GM13976 (cell line): ENCODE measurements at regions of chr6 and their contacts with region 1.

Region 1: DNA sequence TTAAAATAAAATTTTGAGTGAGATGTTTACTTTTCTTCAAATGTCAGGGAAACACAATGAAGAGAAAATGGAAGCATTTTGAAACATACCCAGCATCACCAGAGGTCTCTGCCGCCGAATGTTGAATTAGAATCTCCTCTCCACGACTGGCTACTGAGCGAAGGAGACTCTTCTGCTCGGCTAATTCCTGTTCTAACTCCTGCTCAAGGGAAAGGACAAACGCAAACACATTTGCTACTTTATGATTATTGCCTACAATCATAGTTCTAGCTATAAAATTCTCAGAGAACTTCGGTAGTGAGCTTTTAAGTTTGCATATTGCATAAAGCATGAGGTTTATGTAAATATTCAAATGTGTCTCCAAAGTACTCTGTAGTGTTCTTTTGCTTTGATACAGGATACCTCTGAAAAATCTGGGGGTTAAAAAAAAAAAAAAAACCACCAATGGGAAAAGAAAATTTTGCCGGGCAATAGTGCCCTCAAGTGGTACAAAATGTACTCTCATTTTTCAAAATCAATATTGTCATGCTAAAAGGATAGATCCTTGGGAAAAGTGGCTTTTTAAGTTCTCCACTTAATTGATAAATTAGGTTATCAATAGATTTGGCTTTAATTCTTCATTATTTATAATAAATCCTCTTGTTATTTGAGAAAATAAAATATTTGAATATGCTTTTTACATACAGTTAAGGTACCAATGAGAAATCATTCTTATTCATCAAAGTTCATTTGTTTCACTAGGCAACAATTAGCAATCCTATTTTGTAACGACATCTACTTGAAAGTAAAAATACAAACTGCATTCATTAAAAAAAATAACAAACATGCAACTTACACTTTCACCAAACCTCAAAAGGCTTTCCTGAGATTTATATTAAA is 369.0 kb downstream of the SYNE1 start:
- DNase-seq: peak; percentile 24
- CTCF ChIP-seq: peak; percentile 30

Region 2: GRCh38 chr6:151681433-151682059 is 586.7 kb before region 1 on chr6:
- in situ Hi-C with region 1: loop called (anchors 10 kb)
- DNase-seq: no peak
- CTCF ChIP-seq: no peak

Region 3: DNA sequence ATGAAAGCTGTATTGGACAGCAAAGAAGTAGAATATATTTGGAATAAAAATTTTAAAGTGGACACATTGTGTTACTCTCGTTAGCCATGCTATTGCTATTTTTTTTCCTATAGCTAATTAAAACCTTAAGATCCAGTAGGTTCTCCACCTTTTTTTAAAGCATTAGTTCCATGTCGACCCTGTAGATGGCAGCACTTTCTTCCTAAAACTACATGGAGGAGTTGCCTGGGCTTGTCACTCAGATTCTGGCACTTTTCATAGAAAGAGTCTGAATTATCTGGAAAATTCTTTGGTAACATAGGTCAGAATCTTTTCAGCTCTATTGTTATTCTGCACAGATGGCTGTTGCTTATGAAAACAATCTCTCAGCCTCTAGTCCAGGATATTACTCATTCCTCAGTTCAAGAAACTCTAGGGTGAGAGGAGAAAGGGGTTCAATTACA is 502.7 kb before region 1 on chr6:
- in situ Hi-C with region 1: loop called (anchors 10 kb)
- DNase-seq: peak; percentile 67
- CTCF ChIP-seq: peak; percentile 52

Region 4: DNA sequence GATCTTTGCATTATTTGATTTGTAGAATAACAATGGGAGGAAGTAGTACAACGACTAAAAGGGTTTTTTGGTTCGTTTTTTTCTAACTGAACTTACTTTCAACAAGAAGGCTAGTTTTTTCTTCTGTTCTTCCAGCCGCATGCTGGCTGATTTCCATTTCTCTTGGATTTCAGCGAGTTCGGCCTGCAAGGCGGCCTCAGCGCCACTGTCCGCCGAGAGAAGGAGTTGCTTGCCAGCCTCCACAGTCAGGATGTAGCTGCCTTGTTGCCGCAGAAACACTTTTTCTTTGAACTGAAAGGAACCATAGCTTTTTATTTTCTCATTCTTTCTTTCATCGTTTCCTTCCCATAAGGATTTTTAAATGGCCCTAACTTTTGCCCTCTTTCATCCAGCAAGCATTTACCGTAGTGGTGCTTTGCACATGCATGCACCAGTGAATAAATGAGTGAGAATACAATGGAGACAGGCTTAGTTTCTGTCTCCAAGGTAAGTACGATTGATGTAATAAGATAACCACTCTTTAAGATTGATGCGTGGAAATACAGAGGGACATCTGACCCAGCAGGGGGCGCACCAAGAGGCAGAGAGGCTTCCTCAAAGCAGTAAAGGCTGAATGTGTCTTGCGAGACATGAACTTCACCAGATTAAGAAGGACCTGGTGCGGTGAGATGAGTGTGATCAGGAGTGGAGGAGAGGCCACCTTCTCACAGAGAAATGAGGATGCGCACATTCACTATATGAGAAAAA is 62.0 kb before region 1 on chr6:
- in situ Hi-C with region 1: no loop called
- DNase-seq: no peak
- CTCF ChIP-seq: no peak